ENCODE measurements at regions of chr4 and their contacts with region 1.

Region 1: GRCh38 chr4:183797445-183798300 is 107.4 kb upstream of the STOX2 start:
- DNase-seq: peak; percentile 77
- ATAC-seq: peak; percentile 68

Region 2: GRCh38 chr4:183763990-183764754 is 33.5 kb before region 1 on chr4:
- intact Hi-C with region 1: loop called (anchors 5 kb)
- DNase-seq: peak; percentile 79
- ATAC-seq: peak; percentile 34

Region 3: GRCh38 chr4:183783991-183784553 is 13.6 kb before region 1 on chr4:
- intact Hi-C with region 1: loop called (anchors 1 kb)
- DNase-seq: no peak
- ATAC-seq: peak; percentile 97

Measured in Right ventricle myocardium inferior (tissue), 1 donor.